GM23248 (cell line): ENCODE measurements at regions of chr2 and their contacts with region 1.

Region 1: DNA sequence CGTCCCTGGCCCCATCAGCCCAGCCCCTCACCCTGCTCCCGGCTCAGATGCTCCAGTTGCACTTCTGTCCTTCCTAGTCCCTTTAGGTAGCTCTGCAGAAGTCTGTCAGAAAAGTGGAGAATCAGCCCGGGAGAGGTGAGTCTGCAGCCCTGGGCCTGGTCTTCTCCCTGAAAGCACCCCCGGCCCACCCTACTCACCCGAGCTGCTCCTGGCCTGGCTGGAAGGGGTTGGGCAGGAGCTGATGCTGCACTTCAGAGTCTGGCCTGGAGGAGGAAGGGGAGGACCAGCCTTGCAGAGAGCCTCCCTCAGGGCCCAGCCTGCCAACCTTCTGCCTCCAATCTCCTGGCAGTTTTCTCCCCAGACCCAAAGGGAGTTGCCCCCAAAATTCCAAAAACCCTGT is 15.8 kb downstream of the KHK start:
- DNase-seq: no peak
- H3K4me3 ChIP-seq: no peak overlapping the region
- H3K27ac ChIP-seq: no peak overlapping the region
- H3K4me1 ChIP-seq: no peaks in the 10 kb centered on the region
- H3K27me3 ChIP-seq: 0 out of 2 replicates have a peak, but pooled peaks cover 4% of the 10 kb centered on the region

Region 2: GRCh38 chr2:26883956-26884355 is 218.4 kb before region 1 on chr2:
- in situ Hi-C with region 1: no loop called
- DNase-seq: no peak
- H3K4me3 ChIP-seq: no peak overlapping the region
- H3K27ac ChIP-seq: no peak overlapping the region
- H3K4me1 ChIP-seq: no peaks in the 10 kb centered on the region
- H3K27me3 ChIP-seq: peaks cover 78% of the 10 kb centered on the region

Region 3: DNA sequence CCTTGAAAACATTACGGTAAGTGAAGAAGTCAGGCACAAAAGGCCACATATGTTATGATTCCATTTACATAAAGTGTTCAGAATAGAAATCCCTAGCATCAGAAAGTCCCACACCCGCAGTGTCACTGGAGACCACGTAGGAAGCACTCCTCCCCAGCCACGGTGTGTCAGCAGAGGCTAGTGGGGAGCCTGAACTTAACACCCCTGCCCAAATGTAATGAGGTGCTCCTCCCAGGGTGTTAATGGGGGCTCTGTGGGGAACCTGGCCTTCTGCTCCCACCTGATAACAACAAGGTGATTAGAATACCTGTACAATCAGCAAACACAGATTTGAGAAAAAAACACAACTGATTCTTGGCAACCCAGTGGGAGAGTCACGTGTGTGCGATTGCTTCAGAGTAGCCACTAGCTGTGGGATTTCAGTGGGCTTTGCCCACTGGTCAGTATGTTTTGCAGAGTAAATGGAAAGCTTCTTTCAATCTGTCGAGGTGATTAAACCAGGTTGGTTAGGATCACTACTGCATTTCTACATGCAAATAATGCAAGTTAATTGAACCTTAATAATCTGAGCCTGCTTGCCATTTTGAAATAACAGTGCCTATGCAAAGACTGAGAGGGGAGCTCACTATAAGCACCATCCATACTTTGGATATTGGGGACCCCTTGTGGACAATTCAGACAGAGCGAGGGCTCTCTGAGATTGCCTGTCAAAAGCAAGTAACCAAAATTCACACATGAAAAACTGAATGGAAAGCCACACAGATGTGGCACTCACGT is 88.9 kb after region 1 on chr2:
- in situ Hi-C with region 1: loop called (anchors 5 kb)
- DNase-seq: peak; percentile 76
- H3K4me3 ChIP-seq: no peak overlapping the region
- H3K27ac ChIP-seq: no peak overlapping the region
- H3K4me1 ChIP-seq: peaks cover under 1% of the 10 kb centered on the region; the same call in 1 of the 2 replicates
- H3K27me3 ChIP-seq: no peaks in the 10 kb centered on the region

Region 4: DNA sequence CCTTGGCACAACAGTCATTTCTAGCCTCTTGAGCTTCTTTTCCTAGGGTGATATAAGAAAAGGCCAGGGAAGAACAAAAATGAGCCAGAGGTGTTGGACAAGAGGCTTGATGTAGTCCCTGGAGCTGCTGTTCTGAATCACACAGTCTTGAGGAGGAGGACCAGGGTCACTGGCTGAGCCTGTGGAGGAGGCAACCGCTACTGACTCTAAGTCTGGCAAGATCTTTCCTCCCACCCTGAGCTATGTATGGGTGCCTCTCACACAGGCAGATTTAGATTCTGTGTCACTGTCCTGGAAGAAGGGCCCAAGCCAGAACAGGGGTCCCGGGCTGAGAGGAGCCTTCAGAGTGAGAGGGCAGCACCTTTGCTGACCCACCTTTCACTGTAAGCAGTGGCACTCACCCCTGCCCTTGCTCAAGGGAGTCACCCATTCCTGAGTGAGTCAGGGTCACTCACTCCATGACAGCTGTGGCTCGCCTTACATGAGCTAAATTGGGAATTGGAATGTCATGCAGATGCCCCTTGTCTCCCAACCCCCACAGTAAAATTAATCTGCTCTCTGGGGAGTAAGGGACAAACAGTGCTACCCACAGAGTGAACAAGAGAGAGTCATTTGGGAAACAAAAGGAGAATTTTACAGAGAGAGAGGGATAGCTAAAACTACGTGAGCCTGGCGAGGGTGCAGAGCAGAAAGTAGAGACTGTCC is 179.7 kb after region 1 on chr2 and contains the start of gene TRIM54:
- in situ Hi-C with region 1: loop called (anchors 10 kb)
- DNase-seq: peak; percentile 56
- H3K4me3 ChIP-seq: no peak within 1 kb of the TSS
- H3K27ac ChIP-seq: no peak within 1 kb of the TSS
- H3K4me1 ChIP-seq: peaks cover 18% of the 10 kb centered on the region
- H3K27me3 ChIP-seq: peaks cover 8% of the 10 kb centered on the region; the same call in 1 of the 2 replicates
- total RNA-seq, gene TRIM54: not detected in 2 replicates